Activated CD4-positive, alpha-beta memory T cell treated with anti-CD3 and anti-CD28 coated beads for 36 hours (primary cell): ENCODE measurements at regions of chr10 and their contacts with region 1.

Region 1: GRCh38 chr10:29635711-29636144 is 957 bp upstream of the SVIL start:
- DNase-seq: no peak
- H3K4me3 Mint-ChIP-seq: no peak overlapping the region
- H3K27ac Mint-ChIP-seq: peak overlapping the region; percentile 42
- H3K4me1 Mint-ChIP-seq: peaks cover 39% of the 10 kb centered on the region
- H3K27me3 Mint-ChIP-seq: no peaks in the 10 kb centered on the region

Region 2: GRCh38 chr10:29646238-29646902 is 10.6 kb after region 1 on chr10:
- CTCF ChIA-PET with region 1: interaction called, 3 read pairs
- POLR2A ChIA-PET with region 1: no interaction called
- intact Hi-C with region 1: loop called (anchors 2 kb)
- DNase-seq: peak; percentile 37
- H3K4me3 Mint-ChIP-seq: no peak overlapping the region
- H3K27ac Mint-ChIP-seq: no peak overlapping the region
- H3K4me1 Mint-ChIP-seq: peaks cover 32% of the 10 kb centered on the region
- H3K27me3 Mint-ChIP-seq: no peaks in the 10 kb centered on the region

Region 3: DNA sequence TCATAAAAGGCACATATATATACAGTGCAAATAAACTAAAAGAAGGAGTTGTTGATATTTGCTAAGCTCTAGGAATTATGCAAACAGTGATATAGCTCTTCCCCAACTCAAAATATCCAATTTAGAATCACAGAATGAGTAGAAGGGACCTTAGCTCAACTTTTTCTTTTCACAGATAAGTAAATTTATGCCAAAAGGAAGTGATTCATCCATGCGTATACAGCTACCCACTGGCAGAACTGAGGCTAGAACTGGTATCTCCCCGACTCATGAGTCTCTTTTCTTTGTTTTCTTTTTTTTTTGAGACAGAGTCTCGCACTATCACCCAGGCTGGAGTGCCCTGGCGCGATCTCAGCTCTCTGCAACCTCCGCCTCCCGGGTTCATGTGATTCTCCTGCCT is 53.3 kb after region 1 on chr10:
- CTCF ChIA-PET with region 1: no interaction called
- POLR2A ChIA-PET with region 1: no interaction called
- intact Hi-C with region 1: loop called (anchors 2 kb)
- DNase-seq: peak; percentile 35
- H3K4me3 Mint-ChIP-seq: peak overlapping the region; percentile 16
- H3K27ac Mint-ChIP-seq: no peak overlapping the region
- H3K4me1 Mint-ChIP-seq: peaks cover 33% of the 10 kb centered on the region
- H3K27me3 Mint-ChIP-seq: no peaks in the 10 kb centered on the region